ENCODE measurements at regions of chr10 and their contacts with region 1.

Region 1: GRCh38 chr10:70461215-70461986 is 17.2 kb upstream of the PALD1 start:
- DNase-seq: peak; percentile 62
- H3K4me3 Mint-ChIP-seq: no peak overlapping the region
- H3K27ac Mint-ChIP-seq: no peak overlapping the region
- H3K4me1 Mint-ChIP-seq: peaks cover 2% of the 10 kb centered on the region
- H3K27me3 Mint-ChIP-seq: peaks cover 29% of the 10 kb centered on the region

Region 2: DNA sequence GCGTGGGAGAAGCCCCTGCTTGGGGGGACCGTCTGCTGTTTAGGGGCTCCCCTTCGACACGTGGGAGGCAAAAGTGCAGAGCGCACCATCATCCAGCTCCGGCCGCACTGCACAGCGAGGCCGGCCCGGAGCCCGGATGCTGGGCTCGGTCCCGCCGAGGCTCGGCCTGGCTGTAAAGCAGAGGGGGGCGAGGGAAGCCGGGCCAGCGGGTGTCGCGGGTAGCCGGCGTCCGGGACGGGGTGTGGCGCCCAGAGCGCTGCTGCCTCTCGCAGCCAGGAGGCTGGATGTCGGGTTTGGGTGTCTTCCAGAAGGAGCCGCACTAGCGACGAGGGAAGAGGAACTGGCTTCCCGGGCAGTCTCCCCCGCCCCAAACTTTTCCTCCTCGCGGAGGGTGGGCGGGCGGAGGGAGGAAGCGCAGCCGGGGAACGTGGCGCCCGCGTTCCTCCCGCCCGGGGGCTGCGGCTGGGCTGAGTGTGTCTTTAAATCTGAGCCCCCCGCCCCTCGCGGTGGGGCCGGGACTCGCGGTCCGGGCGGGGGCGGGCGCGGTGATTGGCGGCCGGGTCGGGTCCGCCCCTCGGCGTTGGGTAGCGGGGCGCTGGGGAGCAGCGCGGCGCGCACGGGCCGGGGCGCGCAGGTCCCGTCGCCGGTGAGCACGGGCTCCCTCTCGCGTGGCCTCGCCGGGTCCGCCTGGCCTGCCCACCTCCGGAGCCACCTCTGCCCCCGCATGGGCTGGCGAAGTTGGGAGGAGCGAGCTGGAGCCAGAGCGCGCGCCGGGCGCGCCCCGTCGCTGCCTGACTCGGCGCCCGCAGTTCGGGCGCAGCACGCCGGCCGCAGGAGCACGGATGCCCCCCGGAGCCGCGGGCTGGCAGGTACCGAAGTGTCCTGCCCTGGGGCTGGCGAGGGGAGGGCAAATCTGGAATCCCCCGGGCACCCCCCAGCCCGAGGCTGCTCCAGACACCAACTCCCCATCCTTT is 17.1 kb after region 1 on chr10 and contains the start of gene PALD1:
- CTCF ChIA-PET with region 1: interaction called, 23 read pairs
- POLR2A ChIA-PET with region 1: no interaction called
- intact Hi-C with region 1: no loop called
- DNase-seq: peak; percentile 49
- H3K4me3 Mint-ChIP-seq: peak within 1 kb of the TSS; percentile 65
- H3K27ac Mint-ChIP-seq: peak within 1 kb of the TSS; percentile 55
- H3K4me1 Mint-ChIP-seq: peaks cover 32% of the 10 kb centered on the region
- H3K27me3 Mint-ChIP-seq: peaks cover 10% of the 10 kb centered on the region
- total RNA-seq, gene PALD1: 0.41 to 0.48 TPM

Region 3: GRCh38 chr10:70540089-70540788 is 78.8 kb after region 1 on chr10:
- CTCF ChIA-PET with region 1: interaction called, 41 read pairs
- POLR2A ChIA-PET with region 1: no interaction called
- intact Hi-C with region 1: loop called (anchors 1 kb)
- DNase-seq: peak; percentile 33
- H3K4me3 Mint-ChIP-seq: no peak overlapping the region
- H3K27ac Mint-ChIP-seq: no peak overlapping the region
- H3K4me1 Mint-ChIP-seq: no peaks in the 10 kb centered on the region
- H3K27me3 Mint-ChIP-seq: no peaks in the 10 kb centered on the region

Region 4: DNA sequence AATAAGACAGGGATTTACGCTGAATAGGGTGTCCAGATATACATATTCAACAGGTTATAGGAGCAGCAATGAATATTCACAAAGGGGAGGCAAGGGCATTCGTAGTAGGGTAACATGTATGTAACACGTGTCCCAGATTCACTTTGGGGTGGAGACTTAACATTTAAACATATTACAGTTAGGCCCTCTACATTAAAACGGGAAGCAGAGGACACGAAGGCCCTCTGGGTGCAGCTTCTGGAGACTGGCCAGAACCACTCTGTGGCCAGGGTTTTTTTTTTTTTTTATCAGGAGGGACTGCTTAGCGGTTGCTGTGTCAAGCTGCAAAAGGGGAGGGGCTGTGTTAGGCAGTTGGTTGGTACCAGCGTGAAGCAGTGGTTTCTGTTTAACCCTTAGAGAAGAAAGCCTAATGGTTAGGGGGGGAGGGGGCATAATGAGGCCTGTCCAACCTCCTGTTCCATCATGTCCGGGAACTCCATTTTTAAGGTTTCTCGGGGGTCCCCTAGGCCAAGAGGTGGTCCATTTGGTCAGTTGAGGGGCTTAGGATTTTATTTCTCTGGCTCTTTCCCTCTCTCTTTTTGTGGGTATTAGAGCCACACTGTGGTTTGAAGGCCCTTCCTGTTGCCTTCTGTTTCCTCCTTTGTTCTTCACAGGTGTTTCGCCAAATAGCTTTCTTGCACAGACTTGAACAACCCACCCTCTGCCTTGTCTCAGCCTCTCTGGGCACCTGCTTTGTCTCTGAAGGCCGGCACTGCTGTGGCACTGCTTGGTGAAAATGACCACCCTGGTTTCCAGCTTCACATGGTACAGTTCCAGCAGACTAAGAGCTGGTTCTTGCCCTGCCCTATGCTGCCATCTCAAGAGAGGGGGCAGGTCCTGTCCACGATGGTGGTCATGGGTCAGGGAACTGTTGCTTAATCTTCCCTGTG is 114.7 kb after region 1 on chr10:
- CTCF ChIA-PET with region 1: no interaction called
- POLR2A ChIA-PET with region 1: no interaction called
- intact Hi-C with region 1: no loop called
- DNase-seq: peak; percentile 38
- H3K4me3 Mint-ChIP-seq: no peak overlapping the region
- H3K27ac Mint-ChIP-seq: peak overlapping the region; percentile 26
- H3K4me1 Mint-ChIP-seq: peaks cover 43% of the 10 kb centered on the region
- H3K27me3 Mint-ChIP-seq: no peaks in the 10 kb centered on the region

Region 5: DNA sequence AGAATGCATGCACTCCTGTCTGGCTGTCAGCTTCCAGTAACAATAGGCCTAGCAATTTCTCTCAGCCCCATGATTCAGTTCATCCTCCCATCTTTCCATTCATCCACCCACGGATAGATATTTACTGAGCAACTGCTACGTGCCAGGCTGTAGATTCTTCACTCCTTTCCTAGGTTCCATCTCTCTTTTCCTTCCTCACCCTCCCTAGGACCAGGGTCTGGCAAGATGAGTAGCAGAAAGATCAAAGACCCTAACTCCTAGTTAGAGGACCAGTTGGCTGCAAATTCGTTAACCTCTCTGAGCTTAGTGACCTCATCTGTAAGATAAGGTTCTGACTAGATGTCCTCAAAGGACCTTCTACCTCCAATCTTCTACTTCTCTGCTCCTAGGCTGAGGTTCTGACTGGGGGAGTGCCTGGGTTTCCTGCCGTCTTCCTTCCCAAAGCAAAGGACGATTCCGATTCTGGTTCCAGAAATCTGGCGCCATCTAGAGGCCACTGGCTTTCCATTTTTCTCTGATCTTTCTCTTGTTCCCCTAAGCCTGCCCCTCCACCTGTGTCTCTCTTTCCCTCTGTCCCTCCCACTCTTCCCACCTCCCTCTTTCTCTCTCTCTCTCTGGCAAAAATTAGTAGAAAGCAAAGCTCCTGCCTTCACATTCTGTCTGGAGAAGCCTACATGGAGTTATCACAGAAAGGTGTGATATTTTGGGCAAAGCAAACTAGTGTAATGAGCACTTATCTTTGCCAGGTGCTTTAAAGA is 297.5 kb after region 1 on chr10:
- CTCF ChIA-PET with region 1: interaction called, 25 read pairs
- POLR2A ChIA-PET with region 1: no interaction called
- intact Hi-C with region 1: loop called (anchors 2 kb)
- DNase-seq: peak; percentile 76
- H3K4me3 Mint-ChIP-seq: no peak overlapping the region
- H3K27ac Mint-ChIP-seq: no peak overlapping the region
- H3K4me1 Mint-ChIP-seq: peaks cover 7% of the 10 kb centered on the region
- H3K27me3 Mint-ChIP-seq: peaks cover 2% of the 10 kb centered on the region

Measured in activated CD4-positive, alpha-beta memory T cell treated with anti-CD3 and anti-CD28 coated beads for 36 hours (primary cell).